ENCODE measurements at regions of chr16 and their contacts with region 1.

Region 1: GRCh38 chr16:11715246-11715947 is 27.3 kb downstream of the TXNDC11 start:
- DNase-seq: no peak
- ATAC-seq: no peak
- H3K4me3 ChIP-seq: no peak overlapping the region
- H3K27ac ChIP-seq: no peak overlapping the region
- H3K4me1 ChIP-seq: peaks cover 0 to 28% (median 3%) of the 10 kb centered on the region in 9 donors
- H3K27me3 ChIP-seq: no peaks in the 10 kb centered on the region
- CTCF ChIP-seq: no peak

Region 2: GRCh38 chr16:10964039-10964890 is 751.1 kb before region 1 on chr16:
- intact Hi-C with region 1: loop called in 2 of 10 experiments (anchors 10 kb)
- DNase-seq: peak; percentile 83 to 87
- ATAC-seq: peak; percentile 81 to 91 (median 86)
- H3K4me3 ChIP-seq: no peak overlapping the region
- H3K27ac ChIP-seq: peak overlapping the region in 3 of 10 donors; percentile 30 to 47 (median 46)
- H3K4me1 ChIP-seq: peaks cover 4 to 39% (median 14%) of the 10 kb centered on the region in 9 donors
- H3K27me3 ChIP-seq: no peaks in the 10 kb centered on the region
- CTCF ChIP-seq: peak; percentile 78 to 98 (median 96)

Region 3: DNA sequence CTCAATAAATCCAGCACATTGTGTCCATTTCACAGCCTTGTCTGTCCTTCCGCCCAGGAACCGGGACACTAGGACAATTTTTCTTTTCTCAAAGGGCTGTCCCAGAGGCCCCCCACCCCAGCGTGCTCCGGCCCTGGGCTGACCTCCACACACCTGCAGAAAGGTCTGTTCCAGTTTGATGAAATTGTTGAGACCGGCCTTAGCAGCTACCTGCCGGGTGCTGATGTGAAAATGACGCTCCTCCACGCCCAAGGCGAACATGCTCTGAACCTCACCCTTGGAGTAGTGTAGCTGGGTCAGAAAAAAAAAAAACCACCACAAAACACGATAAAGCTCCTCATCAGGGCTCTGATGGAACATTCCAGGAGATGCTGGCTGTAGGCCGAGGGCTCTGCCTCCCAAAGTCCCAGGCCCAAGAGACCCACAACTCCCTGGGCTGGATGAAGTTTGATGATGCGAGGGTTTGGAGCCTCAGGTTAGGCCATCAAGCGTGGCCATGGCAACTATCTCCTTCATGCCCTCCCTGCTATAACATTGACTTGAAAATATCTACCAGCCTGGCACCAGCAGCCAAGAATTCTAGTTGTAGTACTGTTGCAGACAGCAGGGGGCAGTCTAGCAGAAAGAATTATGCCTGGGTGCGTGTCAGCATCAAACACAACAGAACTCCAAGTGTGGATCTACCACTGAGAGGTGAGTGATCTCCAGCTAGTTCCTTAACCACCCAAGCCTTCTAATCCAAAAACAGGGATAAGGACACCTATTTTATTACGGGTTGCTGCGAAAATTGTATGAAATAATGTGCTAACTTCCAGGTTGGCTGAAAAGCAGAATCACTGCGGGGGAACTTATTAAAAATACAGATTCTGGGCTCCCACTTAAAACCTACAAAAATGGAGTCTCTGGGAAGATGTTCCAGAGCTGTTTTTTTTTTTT is 308.1 kb before region 1 on chr16:
- intact Hi-C with region 1: loop called in 3 of 10 experiments (anchors 2 to 5 kb)
- DNase-seq: peak in 1 of 2 donors; percentile 58
- ATAC-seq: peak in 6 of 8 donors; percentile 34 to 76 (median 51)
- H3K4me3 ChIP-seq: no peak overlapping the region
- H3K27ac ChIP-seq: no peak overlapping the region
- H3K4me1 ChIP-seq: peaks cover 0 to 4% (median 0%) of the 10 kb centered on the region in 9 donors
- H3K27me3 ChIP-seq: no peaks in the 10 kb centered on the region
- CTCF ChIP-seq: peak; percentile 38 to 81 (median 66)

Region 4: DNA sequence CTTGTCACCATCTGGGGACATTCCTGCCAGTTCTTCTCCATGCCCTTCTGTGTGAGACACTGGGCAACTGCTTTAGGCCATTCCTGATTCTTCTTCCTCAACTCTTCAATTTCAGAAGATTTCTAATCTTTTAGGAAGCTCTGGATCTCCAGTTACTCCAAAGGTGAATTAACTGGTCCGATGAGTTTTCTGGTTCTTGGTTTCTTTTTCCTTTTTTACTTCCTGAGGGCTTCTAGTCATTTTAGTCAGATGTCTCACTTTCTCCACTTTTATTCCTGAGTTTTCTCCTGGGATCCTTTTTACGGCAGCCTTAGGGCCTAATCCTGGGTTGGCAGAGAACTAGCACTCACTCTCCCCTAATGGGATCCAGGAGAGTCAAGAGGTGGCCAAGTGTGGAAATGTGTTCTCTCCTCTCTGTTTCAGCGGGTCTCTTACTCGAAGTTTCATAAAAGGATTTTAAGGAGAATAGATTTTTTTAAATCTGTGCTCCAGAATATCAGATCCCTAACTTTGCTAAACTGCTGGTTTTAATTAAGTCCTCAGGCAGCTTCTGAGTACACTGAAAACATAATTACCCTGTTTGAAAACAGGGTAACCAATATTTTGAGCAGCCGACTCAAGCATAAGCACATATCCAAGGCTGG is 262.5 kb before region 1 on chr16:
- intact Hi-C with region 1: no loop called
- DNase-seq: no peak
- ATAC-seq: no peak
- H3K4me3 ChIP-seq: no peak overlapping the region
- H3K27ac ChIP-seq: peak overlapping the region in 5 of 10 donors; percentile 7 to 50 (median 25)
- H3K4me1 ChIP-seq: peaks cover 0 to 10% (median 0%) of the 10 kb centered on the region in 9 donors
- H3K27me3 ChIP-seq: no peaks in the 10 kb centered on the region
- CTCF ChIP-seq: no peak

Region 5: DNA sequence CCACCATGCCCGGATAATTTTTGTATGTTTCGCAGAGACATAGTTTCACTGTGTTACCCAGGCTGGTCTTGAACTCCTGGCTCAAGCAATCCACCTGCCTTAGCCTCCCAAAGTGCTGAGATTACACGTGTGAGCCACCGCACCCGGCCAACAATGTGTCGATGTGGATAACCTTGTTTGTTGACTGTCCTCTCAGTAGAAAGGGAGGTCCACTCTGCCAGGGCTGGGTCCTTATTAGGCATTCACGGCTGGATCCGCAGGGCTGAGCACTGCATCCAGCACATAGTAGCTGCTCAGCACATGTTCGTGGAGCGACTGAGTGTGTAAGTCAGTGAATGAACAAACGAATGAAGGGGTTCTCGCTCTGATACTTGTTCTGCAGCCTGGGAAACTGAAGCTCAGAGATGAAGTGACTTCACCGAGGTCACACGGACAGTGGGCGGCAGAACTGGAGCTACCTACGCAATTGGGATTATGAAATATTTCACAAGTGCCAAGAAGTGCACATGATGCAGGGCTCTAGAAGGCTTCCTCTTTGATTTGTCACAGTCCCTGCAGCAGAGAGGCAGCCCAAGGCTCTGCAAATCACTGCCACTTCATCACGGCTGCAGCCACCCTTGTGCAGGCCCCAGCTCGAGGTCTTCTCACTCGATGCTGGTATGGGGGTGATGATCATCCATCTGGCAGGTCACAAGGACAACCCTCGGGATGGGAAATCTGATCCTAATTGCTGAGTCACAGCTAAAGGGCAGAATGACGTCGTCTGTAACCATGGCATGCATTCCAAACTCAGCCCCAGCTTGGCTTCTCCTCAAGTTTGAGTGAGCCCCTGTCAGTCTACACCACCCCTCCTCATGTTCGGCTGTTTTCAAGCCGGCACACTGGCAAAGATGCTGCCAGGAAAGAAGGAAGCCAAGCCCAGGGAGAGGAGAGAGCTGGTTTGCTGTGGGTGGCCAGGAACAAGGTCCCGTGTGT is 75.2 kb before region 1 on chr16:
- intact Hi-C with region 1: loop called in 3 of 10 experiments (anchors 2 to 10 kb)
- DNase-seq: peak; percentile 79 to 89
- ATAC-seq: peak; percentile 91 to 97 (median 92)
- H3K4me3 ChIP-seq: no peak overlapping the region
- H3K27ac ChIP-seq: peak overlapping the region; percentile 82 to 92 (median 87)
- H3K4me1 ChIP-seq: peaks cover 5 to 25% (median 16%) of the 10 kb centered on the region in 9 donors
- H3K27me3 ChIP-seq: no peaks in the 10 kb centered on the region
- CTCF ChIP-seq: no peak

Region 6: GRCh38 chr16:11667824-11668622 is 47.4 kb before region 1 on chr16 and contains the start of gene SNN:
- intact Hi-C with region 1: loop called in 1 of 10 experiments (anchors 10 kb)
- DNase-seq: peak; percentile 88 to 93
- ATAC-seq: peak; percentile 84 to 95 (median 88)
- H3K4me3 ChIP-seq: peak within 1 kb of the TSS; percentile 67 to 98 (median 92)
- H3K27ac ChIP-seq: peak within 1 kb of the TSS; percentile 73 to 89 (median 86)
- H3K4me1 ChIP-seq: peaks cover 32 to 69% (median 58%) of the 10 kb centered on the region in 9 donors
- H3K27me3 ChIP-seq: no peaks in the 10 kb centered on the region
- CTCF ChIP-seq: no peak
- total RNA-seq, gene SNN: 25.5 to 61.4 (median 37.6) TPM

Region 7: GRCh38 chr16:11748404-11749254 is 33.2 kb after region 1 on chr16:
- intact Hi-C with region 1: no loop called
- DNase-seq: no peak
- ATAC-seq: no peak
- H3K4me3 ChIP-seq: no peak overlapping the region
- H3K27ac ChIP-seq: no peak overlapping the region
- H3K4me1 ChIP-seq: peaks cover 0 to 9% (median under 1%) of the 10 kb centered on the region in 9 donors
- H3K27me3 ChIP-seq: no peaks in the 10 kb centered on the region
- CTCF ChIP-seq: no peak

Region 8: DNA sequence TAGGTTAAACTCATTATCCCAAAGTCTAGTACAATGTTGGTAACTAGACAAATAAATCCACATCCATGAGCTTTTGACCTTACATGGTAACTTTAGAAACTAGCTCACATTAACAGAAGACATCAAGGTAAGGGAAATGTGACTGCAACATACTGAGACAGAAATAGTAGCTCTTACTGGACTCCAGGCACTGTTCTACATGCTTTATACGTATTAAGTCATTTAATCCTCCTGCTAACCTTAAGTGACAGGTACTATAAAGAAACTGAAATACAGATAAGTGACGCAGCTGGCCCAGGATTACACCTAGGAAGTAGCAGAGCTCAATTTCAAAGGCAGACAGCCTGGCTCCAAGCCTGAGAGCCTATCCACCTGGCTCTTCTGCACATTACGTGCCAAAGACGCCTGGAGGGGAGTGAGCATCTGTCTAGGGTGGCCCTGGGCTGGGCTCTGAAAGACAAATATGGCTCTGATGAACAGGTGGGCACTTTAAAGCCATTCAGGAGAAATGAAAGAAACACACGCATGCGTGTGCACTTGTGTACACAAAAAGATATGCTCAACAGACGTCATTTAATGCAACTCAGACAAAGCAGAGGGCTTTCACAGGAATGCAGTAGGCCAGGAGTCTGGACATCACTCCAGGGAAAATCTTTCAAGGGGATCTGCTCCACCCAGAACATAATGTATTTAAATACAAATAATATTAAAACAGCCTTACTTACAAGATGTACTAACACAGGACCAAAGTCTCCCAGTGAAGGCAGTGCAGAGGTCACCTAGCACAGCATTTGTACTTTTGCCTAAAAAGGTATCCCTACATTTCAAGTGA is 77.2 kb after region 1 on chr16:
- intact Hi-C with region 1: no loop called
- DNase-seq: no peak
- ATAC-seq: no peak
- H3K4me3 ChIP-seq: no peak overlapping the region
- H3K27ac ChIP-seq: peak overlapping the region in 5 of 10 donors; percentile 11 to 66 (median 29)
- H3K4me1 ChIP-seq: peaks cover 8 to 76% (median 55%) of the 10 kb centered on the region in 9 donors
- H3K27me3 ChIP-seq: no peaks in the 10 kb centered on the region
- CTCF ChIP-seq: no peak

Measured in heart right ventricle (tissue), 16 donors.